OCI-LY7 (cell line): ENCODE measurements at regions of chr12 and their contacts with region 1.

Region 1: GRCh38 chr12:8949342-8950220 is at the start of gene M6PR:
- DNase-seq: peak; percentile 97
- H3K4me3 ChIP-seq: peak within 1 kb of the TSS; percentile 88
- H3K27ac ChIP-seq: peak within 1 kb of the TSS; percentile 83
- H3K4me1 ChIP-seq: peaks cover 28% of the 10 kb centered on the region
- CTCF ChIP-seq: peak; percentile 73
- total RNA-seq, gene M6PR: 108 and 142 TPM in 2 replicates

Region 2: GRCh38 chr12:8697476-8698131 is 252.0 kb before region 1 on chr12 and contains the start of gene RIMKLB:
- CTCF ChIA-PET with region 1: no interaction called
- POLR2A ChIA-PET with region 1: interaction called, 8 read pairs
- intact Hi-C with region 1: loop called (anchors 5 kb)
- DNase-seq: peak; percentile 89
- H3K4me3 ChIP-seq: peak within 1 kb of the TSS; percentile 86
- H3K27ac ChIP-seq: peak within 1 kb of the TSS; percentile 100
- H3K4me1 ChIP-seq: peaks cover 73% of the 10 kb centered on the region
- CTCF ChIP-seq: 0 out of 2 replicates have a peak, but pooled peaks have one; percentile 4
- total RNA-seq, gene RIMKLB: 109 and 117 TPM in 2 replicates

Region 3: GRCh38 chr12:8912914-8913313 is 36.7 kb before region 1 on chr12:
- CTCF ChIA-PET with region 1: interaction called, 3 read pairs
- POLR2A ChIA-PET with region 1: interaction called, 4 read pairs
- intact Hi-C with region 1: loop called (anchors 2 kb)
- DNase-seq: peak; percentile 60
- H3K4me3 ChIP-seq: no peak overlapping the region
- H3K27ac ChIP-seq: peak overlapping the region; percentile 56
- H3K4me1 ChIP-seq: peaks cover 43% of the 10 kb centered on the region
- CTCF ChIP-seq: peak; percentile 65

Region 4: GRCh38 chr12:9039397-9039977 is 89.9 kb after region 1 on chr12:
- CTCF ChIA-PET with region 1: interaction called, 3 read pairs
- POLR2A ChIA-PET with region 1: no interaction called
- intact Hi-C with region 1: loop called (anchors 2 kb)
- DNase-seq: peak; percentile 68
- H3K4me3 ChIP-seq: no peak overlapping the region
- H3K27ac ChIP-seq: no peak overlapping the region
- H3K4me1 ChIP-seq: no peaks in the 10 kb centered on the region
- CTCF ChIP-seq: peak; percentile 96

Region 5: DNA sequence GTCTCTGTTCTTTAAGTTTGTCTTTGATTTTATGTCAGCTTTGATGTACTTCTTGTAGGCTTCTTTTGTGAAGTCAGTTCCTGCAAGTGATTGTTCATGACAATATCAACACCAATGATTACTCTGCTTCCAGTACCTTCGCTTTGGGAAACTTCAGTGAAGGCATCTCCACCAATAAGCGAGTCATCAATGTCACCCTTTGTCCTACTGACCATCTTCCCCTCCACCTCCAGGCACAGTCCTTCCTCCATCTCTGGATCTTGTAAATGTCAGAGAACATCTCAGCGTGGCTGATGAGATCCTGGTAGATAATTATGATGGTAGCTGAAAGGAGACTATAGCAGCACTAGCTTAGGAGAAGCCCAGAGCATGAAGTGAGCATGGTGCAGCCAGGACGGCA is 206.5 kb after region 1 on chr12:
- CTCF ChIA-PET with region 1: no interaction called
- POLR2A ChIA-PET with region 1: no interaction called
- intact Hi-C with region 1: no loop called
- DNase-seq: no peak
- H3K4me3 ChIP-seq: no peak overlapping the region
- H3K27ac ChIP-seq: no peak overlapping the region
- H3K4me1 ChIP-seq: no peaks in the 10 kb centered on the region
- CTCF ChIP-seq: no peak